ENCODE measurements at regions of chr2 and their contacts with region 1.

Region 1: GRCh38 chr2:213251618-213252017 is 32.6 kb upstream of the SPAG16 start:
- DNase-seq: peak; percentile 31
- H3K4me3 ChIP-seq: no peak overlapping the region
- H3K27ac ChIP-seq: no peak overlapping the region
- H3K4me1 ChIP-seq: no peaks in the 10 kb centered on the region
- H3K27me3 ChIP-seq: no peaks in the 10 kb centered on the region
- CTCF ChIP-seq: peak; percentile 27 to 57

Region 2: DNA sequence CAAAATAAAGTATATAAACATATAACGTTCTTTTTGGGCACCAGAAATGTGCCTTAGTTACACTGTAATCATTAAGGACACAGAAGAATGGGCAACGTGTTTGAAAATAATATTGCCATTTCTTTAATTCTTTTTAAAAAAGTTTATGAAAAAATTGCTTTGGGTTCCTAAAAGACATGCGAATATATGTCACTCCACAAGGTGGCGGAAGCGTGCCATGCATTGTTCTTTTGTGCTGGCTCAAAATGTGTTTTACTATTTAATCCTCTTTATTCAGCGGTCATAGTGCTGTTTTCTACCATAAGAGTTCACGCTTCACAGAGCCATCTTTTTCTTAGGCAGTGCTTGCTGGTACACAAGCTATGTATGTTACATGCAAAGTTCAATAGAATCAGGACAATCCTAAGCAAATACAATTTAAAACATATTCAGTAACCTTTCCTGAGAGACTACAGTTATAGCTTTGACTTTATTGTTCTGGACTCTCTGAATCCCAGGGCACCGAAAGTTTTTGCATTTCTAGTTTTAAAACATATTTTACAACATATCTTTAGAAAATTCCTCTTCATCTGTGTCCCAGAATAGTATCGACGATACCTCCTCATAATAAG is 565.2 kb before region 1 on chr2:
- CTCF ChIA-PET with region 1: no interaction called
- dilution Hi-C with region 1: no loop called
- in situ Hi-C with region 1: no loop called
- intact Hi-C with region 1: loop called (anchors 2 kb)
- DNase-seq: peak; percentile 50
- H3K4me3 ChIP-seq: no peak overlapping the region
- H3K27ac ChIP-seq: no peak overlapping the region
- H3K4me1 ChIP-seq: no peaks in the 10 kb centered on the region
- H3K27me3 ChIP-seq: no peaks in the 10 kb centered on the region
- CTCF ChIP-seq: peak; percentile 75 to 83

Region 3: GRCh38 chr2:213787869-213788268 is 536.3 kb after region 1 on chr2:
- CTCF ChIA-PET with region 1: no interaction called
- dilution Hi-C with region 1: no loop called
- in situ Hi-C with region 1: loop called in 1 of 2 experiments (anchors 25 kb)
- intact Hi-C with region 1: no loop called
- DNase-seq: no peak
- H3K4me3 ChIP-seq: no peak overlapping the region
- H3K27ac ChIP-seq: no peak overlapping the region
- H3K4me1 ChIP-seq: no peaks in the 10 kb centered on the region
- H3K27me3 ChIP-seq: no peaks in the 10 kb centered on the region
- CTCF ChIP-seq: no peak

Region 4: DNA sequence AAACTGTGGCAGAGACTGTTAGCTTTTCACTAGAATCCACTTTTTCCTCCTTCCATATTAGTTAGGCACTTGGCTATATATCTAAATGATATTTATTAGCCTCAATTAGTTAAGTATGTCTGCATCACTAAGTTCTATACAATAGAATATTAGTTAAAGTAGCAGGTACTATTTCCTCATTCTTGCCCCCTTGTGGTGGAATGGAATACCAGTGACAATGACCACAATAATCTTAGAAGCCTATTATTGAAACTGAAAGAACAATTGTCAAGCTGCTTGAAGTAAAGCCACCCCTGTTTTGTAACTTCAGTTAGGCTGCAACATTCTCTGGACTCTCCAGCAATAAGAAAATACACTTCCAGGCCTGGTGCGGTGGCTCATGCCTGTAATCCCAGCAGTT is 682.9 kb after region 1 on chr2:
- CTCF ChIA-PET with region 1: no interaction called
- dilution Hi-C with region 1: no loop called
- in situ Hi-C with region 1: no loop called
- intact Hi-C with region 1: loop called (anchors 2 kb)
- DNase-seq: peak; percentile 8
- H3K4me3 ChIP-seq: no peak overlapping the region
- H3K27ac ChIP-seq: no peak overlapping the region
- H3K4me1 ChIP-seq: no peaks in the 10 kb centered on the region
- H3K27me3 ChIP-seq: no peaks in the 10 kb centered on the region
- CTCF ChIP-seq: peak; percentile 50 to 52

Region 5: DNA sequence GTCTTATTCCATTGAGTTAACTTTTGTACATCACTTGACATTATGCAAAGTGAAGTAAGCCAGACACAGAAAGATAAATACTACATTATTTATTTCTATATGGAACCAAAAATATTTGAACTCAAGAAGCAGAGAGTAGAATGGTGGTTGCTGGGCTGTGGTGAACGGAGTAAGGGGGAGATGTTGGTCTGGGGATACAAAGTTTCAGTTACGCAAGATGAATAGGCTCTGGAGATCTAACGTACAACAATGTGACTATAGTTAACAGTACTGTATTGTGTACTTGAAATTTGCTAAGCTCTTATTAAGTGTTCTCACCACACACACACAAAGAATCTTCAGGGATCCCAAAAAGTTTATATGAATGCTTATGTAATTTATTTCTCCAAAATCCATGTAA is 1034.4 kb after region 1 on chr2:
- CTCF ChIA-PET with region 1: no interaction called
- dilution Hi-C with region 1: no loop called
- in situ Hi-C with region 1: no loop called
- intact Hi-C with region 1: no loop called
- DNase-seq: no peak
- H3K4me3 ChIP-seq: no peak overlapping the region
- H3K27ac ChIP-seq: no peak overlapping the region
- H3K4me1 ChIP-seq: no peaks in the 10 kb centered on the region
- H3K27me3 ChIP-seq: no peaks in the 10 kb centered on the region
- CTCF ChIP-seq: no peak

Region 6: GRCh38 chr2:214310319-214310718 is 1058.7 kb after region 1 on chr2:
- CTCF ChIA-PET with region 1: no interaction called
- dilution Hi-C with region 1: no loop called
- in situ Hi-C with region 1: no loop called
- intact Hi-C with region 1: loop called (anchors 5 kb)
- DNase-seq: peak; percentile 12
- H3K4me3 ChIP-seq: no peak overlapping the region
- H3K27ac ChIP-seq: no peak overlapping the region
- H3K4me1 ChIP-seq: peaks cover 13% of the 10 kb centered on the region
- H3K27me3 ChIP-seq: no peaks in the 10 kb centered on the region
- CTCF ChIP-seq: peak; percentile 20 to 64

Region 7: GRCh38 chr2:214410918-214411554 is 1159.4 kb after region 1 on chr2 and contains the start of gene VWC2L:
- CTCF ChIA-PET with region 1: no interaction called
- dilution Hi-C with region 1: no loop called
- in situ Hi-C with region 1: no loop called
- intact Hi-C with region 1: loop called (anchors 10 kb)
- DNase-seq: peak; percentile 73
- H3K4me3 ChIP-seq: no peak within 1 kb of the TSS
- H3K27ac ChIP-seq: no peak within 1 kb of the TSS
- H3K4me1 ChIP-seq: no peaks in the 10 kb centered on the region
- H3K27me3 ChIP-seq: no peaks in the 10 kb centered on the region
- CTCF ChIP-seq: no peak
- total RNA-seq, gene VWC2L: not detected

Region 8: DNA sequence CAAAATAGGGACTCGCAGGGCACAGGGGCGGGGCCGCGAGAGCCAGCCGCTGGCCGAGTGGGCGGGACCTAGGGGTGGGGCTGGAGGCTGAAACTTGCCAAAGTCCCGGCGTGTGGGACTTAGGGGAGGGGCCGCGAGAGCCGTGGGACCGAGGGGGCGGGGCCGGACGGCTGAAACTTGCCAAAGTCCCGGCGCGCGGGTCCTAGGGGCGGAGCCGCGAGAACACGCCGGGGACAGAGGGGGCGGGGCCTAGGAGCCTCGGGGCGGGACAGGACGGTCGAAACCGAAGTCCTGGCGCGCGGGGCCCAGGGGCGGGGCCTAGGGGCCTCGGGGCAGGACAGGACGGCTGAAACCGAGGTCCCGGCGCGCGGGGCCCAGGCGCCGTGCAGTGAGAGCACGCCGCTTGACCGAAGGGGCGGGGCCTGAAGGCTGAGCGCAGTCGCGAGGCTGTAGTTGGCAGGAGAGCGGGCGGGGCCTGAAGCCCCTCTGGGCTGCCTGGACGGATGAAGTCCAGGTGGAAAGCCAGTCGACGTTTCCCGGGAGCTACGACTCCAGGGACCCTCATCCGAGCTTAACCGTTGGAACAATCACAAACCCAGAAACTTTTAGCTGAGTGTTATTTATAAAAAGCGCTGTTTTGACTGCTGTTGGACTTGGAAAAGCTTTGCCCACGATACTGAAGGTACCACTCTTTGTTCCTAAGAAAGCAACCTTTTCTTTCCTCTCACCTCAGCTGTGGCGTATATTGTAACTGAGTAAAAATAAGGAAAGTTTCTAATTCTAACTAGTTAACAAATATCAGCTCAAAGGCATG is 1558.3 kb after region 1 on chr2:
- CTCF ChIA-PET with region 1: no interaction called
- dilution Hi-C with region 1: no loop called
- in situ Hi-C with region 1: no loop called
- intact Hi-C with region 1: loop called (anchors 10 kb)
- DNase-seq: peak; percentile 98
- H3K4me3 ChIP-seq: peak overlapping the region; percentile 81 to 99 (median 92)
- H3K27ac ChIP-seq: peak overlapping the region; percentile 87
- H3K4me1 ChIP-seq: peaks cover 24% of the 10 kb centered on the region
- H3K27me3 ChIP-seq: no peaks in the 10 kb centered on the region
- CTCF ChIP-seq: no peak